ENCODE measurements at regions of chr6 and their contacts with region 1.

Region 1: GRCh38 chr6:43216200-43216599 is 13.1 kb downstream of the DNPH1 start:
- DNase-seq: no peak
- H3K4me3 ChIP-seq: no peak overlapping the region
- CTCF ChIP-seq: no peak

Region 2: GRCh38 chr6:43024436-43024835 is 191.8 kb before region 1 on chr6:
- in situ Hi-C with region 1: no loop called
- DNase-seq: no peak
- H3K4me3 ChIP-seq: no peak overlapping the region
- CTCF ChIP-seq: no peak

Region 3: DNA sequence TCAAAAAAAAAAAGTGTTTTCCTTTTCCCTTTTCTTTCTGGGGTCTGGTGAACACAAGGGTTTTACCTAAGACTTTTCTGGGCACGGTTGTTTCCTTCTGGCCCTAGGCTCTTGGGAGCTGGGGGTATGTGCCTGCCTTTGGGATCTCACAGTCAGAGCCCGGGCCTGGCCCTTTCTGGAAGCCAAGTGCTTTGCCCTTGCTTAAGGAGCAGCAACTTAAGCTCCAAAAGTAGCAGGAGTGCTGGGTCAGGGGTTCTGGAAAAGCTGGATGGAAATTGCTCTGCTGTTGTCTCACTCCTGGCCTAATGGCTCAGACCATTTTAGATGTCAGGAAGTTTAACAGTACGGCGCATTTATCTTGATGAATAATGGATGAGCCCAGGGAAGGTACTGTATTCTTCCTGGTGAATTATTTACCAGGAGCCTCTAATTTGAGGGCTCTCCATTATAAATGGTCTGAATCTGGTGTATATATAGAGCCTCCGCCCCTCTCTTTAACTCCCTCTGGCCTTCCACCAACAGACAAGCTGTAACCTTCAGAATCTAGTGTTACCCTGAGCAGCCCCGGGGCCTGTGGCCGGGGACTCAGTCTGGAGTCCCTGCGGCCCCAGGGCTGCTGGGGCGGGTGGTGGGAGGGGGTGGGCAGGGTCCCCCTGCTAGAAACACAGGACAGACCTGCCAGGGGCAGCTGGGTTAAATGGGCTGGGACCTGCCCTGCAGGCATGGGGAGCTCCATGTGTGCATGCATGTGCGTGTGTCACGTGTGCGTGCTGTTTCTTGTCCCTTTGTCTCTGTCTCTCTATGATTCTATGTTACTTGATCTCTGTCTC is 102.6 kb before region 1 on chr6:
- in situ Hi-C with region 1: no loop called
- DNase-seq: no peak
- H3K4me3 ChIP-seq: no peak overlapping the region
- CTCF ChIP-seq: no peak

Region 4: GRCh38 chr6:43181942-43182860 is 34.0 kb before region 1 on chr6 and contains the start of gene CUL9:
- in situ Hi-C with region 1: loop called (anchors 5 kb)
- DNase-seq: no peak
- H3K4me3 ChIP-seq: peak within 1 kb of the TSS; percentile 58
- CTCF ChIP-seq: no peak

Region 5: GRCh38 chr6:43629505-43630300 is 413.5 kb after region 1 on chr6:
- in situ Hi-C with region 1: no loop called
- DNase-seq: peak; percentile 94
- H3K4me3 ChIP-seq: peak overlapping the region; percentile 98
- CTCF ChIP-seq: no peak

Measured in astrocyte of the cerebellum (primary cell).